BJ (cell line): ENCODE measurements at regions of chr18 and their contacts with region 1.

Region 1: GRCh38 chr18:41870817-41871216 is 84.2 kb upstream of the PIK3C3 start:
- DNase-seq: no peak
- H3K4me3 ChIP-seq: no peak overlapping the region
- H3K27me3 ChIP-seq: no peaks in the 10 kb centered on the region
- CTCF ChIP-seq: no peak

Region 2: DNA sequence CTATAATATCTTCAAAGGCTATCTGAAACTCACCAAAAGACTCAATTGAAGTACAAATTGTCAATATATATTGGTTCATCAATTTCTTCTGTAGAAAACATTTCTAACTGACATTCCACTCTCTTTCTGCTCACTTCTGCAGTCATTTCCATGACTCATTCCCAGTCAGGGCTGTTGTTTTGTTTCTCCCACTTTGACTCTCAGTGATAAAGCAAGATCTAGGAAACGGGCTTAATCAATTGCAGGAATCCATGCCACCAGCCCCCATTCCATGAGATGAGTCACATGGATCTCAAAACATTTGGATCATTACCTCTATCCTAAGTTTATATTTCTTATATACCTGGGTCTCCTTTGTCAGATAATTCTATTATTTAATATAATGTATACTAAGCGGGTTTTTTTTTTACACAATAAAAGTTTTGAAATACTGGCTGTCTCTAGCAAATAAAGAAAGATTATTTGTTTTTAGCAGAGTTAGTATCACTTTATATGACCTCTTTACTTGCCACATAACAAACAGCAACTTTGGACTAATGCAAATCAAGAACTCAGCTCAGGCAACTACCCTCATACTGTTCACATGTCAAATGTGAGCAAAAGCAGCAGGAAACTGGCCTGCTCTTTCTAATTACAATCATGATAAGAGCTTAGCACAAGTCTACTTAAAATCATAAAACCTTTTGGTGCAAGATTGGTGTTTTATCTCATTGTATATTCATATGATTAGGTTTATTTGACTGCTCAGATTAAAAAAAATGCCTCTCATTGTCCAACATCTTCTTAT is 166.9 kb before region 1 on chr18:
- CTCF ChIA-PET with region 1: no interaction called
- POLR2A ChIA-PET with region 1: no interaction called
- DNase-seq: no peak
- H3K4me3 ChIP-seq: no peak overlapping the region
- H3K27me3 ChIP-seq: no peaks in the 10 kb centered on the region
- CTCF ChIP-seq: no peak

Region 3: GRCh38 chr18:41899535-41899934 is 28.7 kb after region 1 on chr18:
- CTCF ChIA-PET with region 1: no interaction called
- POLR2A ChIA-PET with region 1: interaction called, 14 read pairs
- DNase-seq: no peak
- H3K4me3 ChIP-seq: no peak overlapping the region
- H3K27me3 ChIP-seq: no peaks in the 10 kb centered on the region
- CTCF ChIP-seq: no peak